Gastrocnemius medialis (tissue), 4 donors: ENCODE measurements at regions of chr2 and their contacts with region 1.

Region 1: DNA sequence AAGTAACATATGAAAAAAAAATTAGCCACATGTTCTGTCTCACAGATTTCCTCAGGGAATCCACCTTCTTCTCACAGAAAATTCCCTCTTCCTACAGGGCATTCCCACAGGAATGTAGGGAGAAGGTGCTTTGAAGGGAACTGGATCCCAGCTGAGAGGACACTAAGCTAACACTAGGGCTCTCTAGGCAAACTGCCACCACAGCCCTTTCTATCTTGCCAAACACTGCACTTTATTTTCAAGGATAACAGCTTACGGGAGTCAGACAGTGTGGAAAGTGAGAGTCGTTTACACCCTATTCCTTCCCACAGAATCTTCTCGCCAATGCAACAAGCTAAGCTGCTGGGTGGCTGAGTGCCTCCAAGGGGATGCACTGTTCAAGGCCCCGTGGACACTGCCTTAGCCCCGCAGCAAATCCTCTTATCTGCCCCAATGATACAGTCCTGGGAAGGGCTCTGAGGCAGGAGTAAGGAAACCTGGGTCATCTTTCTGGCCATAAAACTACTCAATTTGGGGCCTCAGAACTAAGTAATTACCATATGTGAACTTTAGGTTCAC is 76.9 kb downstream of the CCDC93 start:
- DNase-seq: peak; percentile 14 to 67
- ATAC-seq: peak; percentile 84
- H3K4me3 ChIP-seq: no peak overlapping the region
- H3K27ac ChIP-seq: peak overlapping the region; percentile 9 to 56 (median 48)
- H3K4me1 ChIP-seq: peaks cover 21 to 27% of the 10 kb centered on the region in 2 donors
- H3K27me3 ChIP-seq: no peaks in the 10 kb centered on the region
- CTCF ChIP-seq: peak in 1 of 5 experiments; percentile 9
- POLR2A ChIP-seq: no peak

Region 2: GRCh38 chr2:116818973-116819754 is 1117.8 kb before region 1 on chr2:
- in situ Hi-C with region 1: no loop called
- intact Hi-C with region 1: no loop called
- DNase-seq: no peak
- ATAC-seq: no peak
- H3K4me3 ChIP-seq: no peak overlapping the region
- H3K27ac ChIP-seq: no peak overlapping the region
- H3K4me1 ChIP-seq: no peaks in the 10 kb centered on the region
- H3K27me3 ChIP-seq: no peaks in the 10 kb centered on the region
- CTCF ChIP-seq: no peak
- POLR2A ChIP-seq: no peak

Region 3: DNA sequence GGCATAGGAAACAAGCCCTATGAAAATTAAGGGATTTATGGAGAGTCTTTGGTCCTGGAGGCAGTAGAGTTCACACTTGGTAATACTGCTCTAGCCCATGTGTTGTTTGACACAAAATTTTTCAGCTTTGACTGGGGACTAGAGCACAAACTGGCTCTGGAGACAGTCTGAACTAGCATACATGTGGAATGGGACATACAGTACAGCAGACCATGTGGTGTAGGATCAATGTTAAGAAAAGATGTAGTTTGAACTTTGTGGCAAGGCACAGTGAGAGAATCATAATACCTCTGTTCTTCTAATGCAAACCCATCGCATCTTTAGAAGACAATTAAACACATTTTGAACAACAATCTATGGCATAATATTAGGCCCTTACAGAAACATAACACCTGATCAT is 643.9 kb before region 1 on chr2:
- in situ Hi-C with region 1: no loop called
- intact Hi-C with region 1: no loop called
- DNase-seq: no peak
- ATAC-seq: no peak
- H3K4me3 ChIP-seq: no peak overlapping the region
- H3K27ac ChIP-seq: no peak overlapping the region
- H3K4me1 ChIP-seq: no peaks in the 10 kb centered on the region
- H3K27me3 ChIP-seq: no peaks in the 10 kb centered on the region
- CTCF ChIP-seq: no peak
- POLR2A ChIP-seq: no peak

Region 4: GRCh38 chr2:117835990-117836760 is 100.8 kb before region 1 on chr2:
- in situ Hi-C with region 1: no loop called
- intact Hi-C with region 1: loop called (anchors 10 kb)
- DNase-seq: peak; percentile 50 to 68
- ATAC-seq: peak; percentile 88 to 89
- H3K4me3 ChIP-seq: peak overlapping the region; percentile 47 to 65 (median 50)
- H3K27ac ChIP-seq: peak overlapping the region in 1 of 4 donors; percentile 22
- H3K4me1 ChIP-seq: no peaks in the 10 kb centered on the region
- H3K27me3 ChIP-seq: no peaks in the 10 kb centered on the region
- CTCF ChIP-seq: peak; percentile 55 to 85 (median 62)
- POLR2A ChIP-seq: no peak

Region 5: DNA sequence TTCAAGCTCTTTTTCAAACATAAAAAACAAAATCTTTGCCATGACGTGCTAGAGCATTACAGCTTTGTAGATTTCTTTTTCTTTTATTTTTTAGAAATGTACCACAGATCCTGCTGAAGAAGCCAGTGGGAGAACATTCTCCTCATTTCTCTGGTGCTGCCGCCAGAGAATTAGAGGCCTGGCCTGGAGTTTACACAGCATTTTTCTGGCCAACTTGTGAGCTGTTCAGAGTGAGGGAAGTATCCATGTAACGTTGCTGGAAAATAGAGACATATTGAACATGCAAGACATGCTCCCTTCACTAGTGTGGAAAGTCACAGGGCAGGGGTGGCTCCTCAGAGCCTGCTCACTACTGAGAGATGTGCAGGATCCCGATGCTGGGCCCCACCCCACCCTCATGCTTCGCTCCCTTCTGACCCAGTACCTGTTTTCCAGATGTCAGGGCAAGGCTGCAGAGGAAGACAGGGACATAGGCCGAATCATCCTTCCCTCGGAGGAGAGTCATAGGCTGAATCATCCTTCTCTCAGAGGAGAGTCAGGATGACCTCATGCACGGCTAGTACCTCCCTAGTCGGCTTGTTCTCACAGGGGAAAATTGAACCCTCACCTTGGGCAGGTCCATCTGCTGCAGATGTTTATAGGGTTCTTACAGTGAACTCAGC is 449.8 kb after region 1 on chr2:
- in situ Hi-C with region 1: no loop called
- intact Hi-C with region 1: no loop called
- DNase-seq: no peak
- ATAC-seq: no peak
- H3K4me3 ChIP-seq: no peak overlapping the region
- H3K27ac ChIP-seq: no peak overlapping the region
- H3K4me1 ChIP-seq: no peaks in the 10 kb centered on the region
- H3K27me3 ChIP-seq: no peaks in the 10 kb centered on the region
- CTCF ChIP-seq: no peak
- POLR2A ChIP-seq: no peak